ENCODE measurements at regions of chr2 and their contacts with region 1.

Region 1: DNA sequence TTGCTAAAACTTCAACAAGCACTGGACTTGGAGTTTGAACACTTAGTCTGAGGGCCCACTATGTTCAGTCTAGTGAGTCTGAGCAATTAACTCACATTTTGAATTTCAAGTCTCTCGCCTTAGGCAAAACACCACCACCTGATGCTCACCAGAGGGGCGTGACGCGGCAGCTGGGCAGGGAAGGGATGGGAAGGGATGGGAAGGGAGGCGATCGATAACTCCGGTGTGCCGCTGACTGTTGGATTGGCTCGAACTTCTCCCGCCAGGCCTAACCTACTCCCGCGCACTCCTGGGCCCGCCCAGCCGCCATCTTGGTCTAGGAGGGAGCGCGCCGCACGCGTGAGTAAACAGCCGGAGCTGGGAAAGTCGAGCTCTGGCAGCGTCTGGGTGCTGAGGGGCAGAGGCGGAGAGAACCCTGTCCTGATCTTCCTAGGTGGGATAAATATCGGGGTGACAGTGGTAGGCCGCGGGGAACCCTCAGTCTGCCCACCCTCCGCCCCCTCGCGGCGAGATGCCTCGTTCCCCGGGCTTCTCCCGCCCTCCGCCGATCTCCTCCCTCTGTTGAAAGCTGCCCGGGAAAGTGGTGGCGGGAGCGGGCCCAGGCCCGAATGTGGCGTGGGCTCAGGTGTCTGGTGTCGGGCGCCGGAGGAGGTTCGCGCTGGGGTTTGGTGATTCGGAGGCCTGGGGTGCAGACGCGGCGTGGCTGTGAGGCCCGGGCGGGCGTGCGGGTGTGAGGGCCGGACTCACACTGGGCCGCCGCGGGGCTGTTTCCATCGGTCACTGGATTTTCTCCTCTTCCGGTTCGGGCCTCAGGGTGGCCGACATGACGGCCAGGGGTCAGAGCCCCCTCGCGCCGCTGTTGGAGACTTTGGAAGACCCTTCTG is at the start of gene RIF1:
- DNase-seq: peak; percentile 85
- ATAC-seq: peak; percentile 99
- H3K4me3 ChIP-seq: peak within 1 kb of the TSS; percentile 91 to 92
- H3K27ac ChIP-seq: peak within 1 kb of the TSS; percentile 93
- H3K4me1 ChIP-seq: peaks cover 7% of the 10 kb centered on the region
- H3K27me3 ChIP-seq: no peaks in the 10 kb centered on the region
- CTCF ChIP-seq: peak; percentile 76
- total RNA-seq, gene RIF1: 57.7 TPM

Region 2: GRCh38 chr2:151289369-151290088 is 120.3 kb before region 1 on chr2 and contains the start of gene NMI:
- CTCF ChIA-PET with region 1: no interaction called
- POLR2A ChIA-PET with region 1: interaction called, 10 read pairs
- in situ Hi-C with region 1: no loop called
- intact Hi-C with region 1: loop called (anchors 10 kb)
- DNase-seq: no peak
- ATAC-seq: peak; percentile 86
- H3K4me3 ChIP-seq: peak within 1 kb of the TSS; percentile 57 to 74
- H3K27ac ChIP-seq: peak within 1 kb of the TSS; percentile 95
- H3K4me1 ChIP-seq: peaks cover 17% of the 10 kb centered on the region
- H3K27me3 ChIP-seq: no peaks in the 10 kb centered on the region
- CTCF ChIP-seq: peak; percentile 24; the same call in 1 of the 2 replicates
- total RNA-seq, gene NMI: 24.5 TPM

Region 3: GRCh38 chr2:151357359-151357758 is 52.5 kb before region 1 on chr2 and contains the start of gene TNFAIP6:
- CTCF ChIA-PET with region 1: no interaction called
- POLR2A ChIA-PET with region 1: no interaction called
- in situ Hi-C with region 1: no loop called
- intact Hi-C with region 1: no loop called
- DNase-seq: no peak
- ATAC-seq: no peak
- H3K4me3 ChIP-seq: no peak within 1 kb of the TSS
- H3K27ac ChIP-seq: no peak within 1 kb of the TSS
- H3K4me1 ChIP-seq: no peaks in the 10 kb centered on the region
- H3K27me3 ChIP-seq: no peaks in the 10 kb centered on the region
- CTCF ChIP-seq: no peak
- total RNA-seq, gene TNFAIP6: not detected

Region 4: GRCh38 chr2:151381291-151381874 is 28.5 kb before region 1 on chr2:
- CTCF ChIA-PET with region 1: no interaction called
- POLR2A ChIA-PET with region 1: no interaction called
- in situ Hi-C with region 1: no loop called
- intact Hi-C with region 1: no loop called
- DNase-seq: no peak
- ATAC-seq: no peak
- H3K4me3 ChIP-seq: no peak overlapping the region
- H3K27ac ChIP-seq: no peak overlapping the region
- H3K4me1 ChIP-seq: no peaks in the 10 kb centered on the region
- H3K27me3 ChIP-seq: no peaks in the 10 kb centered on the region
- CTCF ChIP-seq: no peak

Measured in Panc1 (cell line).